ENCODE measurements at regions of chr11 and their contacts with region 1.

Region 1: GRCh38 chr11:1946812-1947484 is at the start of gene MRPL23:
- DNase-seq: peak; percentile 23
- H3K4me3 Mint-ChIP-seq: no peak within 1 kb of the TSS
- H3K27ac Mint-ChIP-seq: no peak within 1 kb of the TSS
- H3K4me1 Mint-ChIP-seq: no peaks in the 10 kb centered on the region
- H3K27me3 Mint-ChIP-seq: peaks cover 3% of the 10 kb centered on the region

Region 2: DNA sequence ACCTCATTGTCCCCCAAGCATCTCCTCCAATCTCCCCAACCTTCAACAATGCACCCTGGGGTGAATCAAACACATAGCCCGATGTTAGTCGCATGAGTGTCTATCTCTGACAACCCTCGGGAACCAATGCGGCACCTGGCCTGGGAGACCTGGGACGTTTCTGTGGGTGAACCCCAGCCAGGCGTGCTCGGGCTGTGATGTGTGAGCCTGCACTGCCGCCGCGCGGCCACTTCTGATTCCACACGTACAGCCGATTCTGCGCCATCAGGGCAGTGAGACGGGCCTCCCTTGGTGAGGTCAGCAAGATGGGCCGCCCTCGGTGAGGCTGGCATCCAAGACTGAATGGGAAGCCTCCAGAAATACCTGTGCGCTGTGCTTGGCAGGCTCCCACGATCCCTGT is 55.9 kb after region 1 on chr11:
- CTCF ChIA-PET with region 1: interaction called, 14 read pairs
- DNase-seq: no peak
- H3K4me3 Mint-ChIP-seq: no peak overlapping the region
- H3K27ac Mint-ChIP-seq: no peak overlapping the region
- H3K4me1 Mint-ChIP-seq: no peaks in the 10 kb centered on the region
- H3K27me3 Mint-ChIP-seq: no peaks in the 10 kb centered on the region

Region 3: GRCh38 chr11:2015025-2015424 is 68.1 kb after region 1 on chr11:
- CTCF ChIA-PET with region 1: no interaction called
- DNase-seq: no peak
- H3K4me3 Mint-ChIP-seq: no peak overlapping the region
- H3K27ac Mint-ChIP-seq: no peak overlapping the region
- H3K4me1 Mint-ChIP-seq: no peaks in the 10 kb centered on the region
- H3K27me3 Mint-ChIP-seq: no peaks in the 10 kb centered on the region